Activated naive CD4-positive, alpha-beta T cell treated with anti-CD3 and anti-CD28 coated beads for 36 hours (primary cell): ENCODE measurements at regions of chr14 and their contacts with region 1.

Region 1: GRCh38 chr14:21476925-21477681 is at the starts of genes RAB2B and TOX4:
- DNase-seq: peak; percentile 97
- H3K4me3 Mint-ChIP-seq: peak within 1 kb of the TSS; percentile 100
- H3K27ac Mint-ChIP-seq: peak within 1 kb of the TSS; percentile 98
- H3K4me1 Mint-ChIP-seq: peaks cover 31% of the 10 kb centered on the region
- H3K27me3 Mint-ChIP-seq: no peaks in the 10 kb centered on the region
- total RNA-seq, gene RAB2B: 20.5 to 21.4 TPM
- total RNA-seq, gene TOX4: 57.4 to 58.6 TPM

Region 2: GRCh38 chr14:20989572-20990551 is 487.2 kb before region 1 on chr14 and contains the start of gene METTL17:
- CTCF ChIA-PET with region 1: no interaction called
- intact Hi-C with region 1: loop called (anchors 1 kb)
- DNase-seq: peak; percentile 94
- H3K4me3 Mint-ChIP-seq: peak within 1 kb of the TSS; percentile 86
- H3K27ac Mint-ChIP-seq: peak within 1 kb of the TSS; percentile 86
- H3K4me1 Mint-ChIP-seq: peaks cover 19% of the 10 kb centered on the region
- H3K27me3 Mint-ChIP-seq: no peaks in the 10 kb centered on the region
- total RNA-seq, gene METTL17: 90.9 to 97.5 TPM

Region 3: GRCh38 chr14:21229821-21230220 is 247.3 kb before region 1 on chr14:
- CTCF ChIA-PET with region 1: no interaction called
- intact Hi-C with region 1: no loop called
- DNase-seq: no peak
- H3K4me3 Mint-ChIP-seq: no peak overlapping the region
- H3K27ac Mint-ChIP-seq: peak overlapping the region; percentile 85
- H3K4me1 Mint-ChIP-seq: peaks cover 79% of the 10 kb centered on the region
- H3K27me3 Mint-ChIP-seq: no peaks in the 10 kb centered on the region

Region 4: GRCh38 chr14:21308479-21309237 is 168.4 kb before region 1 on chr14:
- CTCF ChIA-PET with region 1: no interaction called
- intact Hi-C with region 1: loop called (anchors 1 kb)
- DNase-seq: peak; percentile 94
- H3K4me3 Mint-ChIP-seq: peak overlapping the region; percentile 66
- H3K27ac Mint-ChIP-seq: peak overlapping the region; percentile 87
- H3K4me1 Mint-ChIP-seq: peaks cover 23% of the 10 kb centered on the region
- H3K27me3 Mint-ChIP-seq: no peaks in the 10 kb centered on the region

Region 5: DNA sequence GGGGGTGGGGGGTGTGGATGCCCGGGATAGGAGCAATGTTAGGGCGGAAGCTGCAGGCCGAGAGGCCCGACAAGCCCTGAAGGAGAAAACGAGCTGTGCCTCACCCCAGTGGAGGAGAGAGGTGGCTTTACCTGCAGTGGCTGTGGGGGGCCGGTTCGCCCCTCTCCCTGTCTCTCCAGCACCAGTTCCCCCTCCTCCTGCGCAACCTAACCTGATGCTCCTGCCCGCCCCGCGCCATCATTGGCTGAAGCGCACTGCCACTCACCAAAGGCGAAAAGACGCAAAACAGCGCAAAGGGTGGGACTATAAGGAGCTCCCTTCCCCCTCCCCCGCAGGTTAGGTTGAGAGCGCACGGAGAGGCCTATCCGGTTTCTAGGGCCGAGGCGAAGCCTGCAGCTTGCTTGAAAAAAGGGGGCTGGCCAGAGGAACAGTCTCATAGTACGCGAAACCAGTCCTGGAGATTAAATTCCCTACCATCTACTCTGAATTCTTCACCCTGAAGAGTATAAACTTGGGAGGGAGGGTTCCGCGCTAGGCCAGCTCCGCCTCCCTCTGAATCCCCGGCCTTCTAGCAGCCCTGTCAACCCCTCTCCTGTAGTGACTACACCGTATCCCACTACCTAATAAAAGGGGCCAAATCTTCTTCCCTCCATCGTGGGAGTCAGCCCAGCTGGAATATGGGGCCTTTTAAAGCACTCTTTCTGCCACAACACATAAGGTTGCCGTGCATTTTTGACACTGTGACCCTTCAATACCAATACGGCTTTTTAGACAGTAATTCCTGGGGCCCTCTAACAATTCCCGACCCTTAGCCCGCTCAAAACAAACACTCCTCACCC is 39.8 kb before region 1 on chr14:
- CTCF ChIA-PET with region 1: interaction called, 6 read pairs
- intact Hi-C with region 1: loop called (anchors 1 kb)
- DNase-seq: peak; percentile 100
- H3K4me3 Mint-ChIP-seq: peak overlapping the region; percentile 84
- H3K27ac Mint-ChIP-seq: peak overlapping the region; percentile 90
- H3K4me1 Mint-ChIP-seq: peaks cover 52% of the 10 kb centered on the region
- H3K27me3 Mint-ChIP-seq: no peaks in the 10 kb centered on the region

Region 6: DNA sequence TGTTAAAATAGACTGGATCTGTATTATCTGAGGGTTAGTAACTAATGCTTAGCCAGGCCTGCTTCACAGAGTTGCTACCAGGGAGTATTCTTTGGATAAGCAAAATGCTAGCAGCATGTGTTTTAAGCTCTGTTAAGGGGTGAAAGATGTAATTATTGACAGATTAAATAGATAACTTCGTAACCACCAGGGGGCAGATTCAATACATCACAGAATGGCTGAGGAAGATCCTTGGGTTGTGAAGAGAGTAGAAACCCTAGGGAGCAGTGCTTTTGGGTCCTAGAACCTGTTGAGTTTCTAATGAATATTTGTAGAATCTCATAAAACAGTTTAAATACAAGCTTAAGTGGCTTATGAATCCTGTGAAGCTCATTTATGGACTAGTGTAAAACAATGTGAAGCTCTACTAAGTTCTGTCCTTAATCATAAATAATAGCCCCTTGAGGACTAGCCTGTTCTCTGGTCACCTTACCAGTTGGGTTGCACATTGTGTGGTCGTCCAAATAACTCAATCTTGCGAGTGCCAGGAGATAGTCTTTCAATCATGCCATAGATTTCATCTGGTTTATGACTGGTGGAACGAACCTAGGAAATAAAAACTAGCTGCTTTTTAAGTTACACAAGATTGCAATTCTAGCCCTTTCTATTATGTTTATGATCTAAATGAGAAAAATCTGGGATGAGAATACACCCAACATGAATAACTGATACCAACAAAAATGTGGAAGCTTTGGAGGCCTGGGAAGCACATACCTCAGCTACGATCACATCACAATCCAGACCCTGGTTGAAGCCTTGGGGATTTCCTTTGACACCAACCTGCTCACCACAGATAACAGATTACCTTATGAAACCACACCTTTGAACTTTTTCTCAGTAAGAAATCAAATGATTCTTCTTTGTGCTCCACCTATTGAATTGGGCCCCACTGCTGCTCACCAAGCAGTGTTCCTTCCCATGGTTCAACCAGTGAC is 21.7 kb after region 1 on chr14:
- CTCF ChIA-PET with region 1: interaction called, 21 read pairs
- intact Hi-C with region 1: no loop called
- DNase-seq: peak; percentile 32
- H3K4me3 Mint-ChIP-seq: no peak overlapping the region
- H3K27ac Mint-ChIP-seq: peak overlapping the region; percentile 51
- H3K4me1 Mint-ChIP-seq: peaks cover 18% of the 10 kb centered on the region
- H3K27me3 Mint-ChIP-seq: no peaks in the 10 kb centered on the region

Region 7: GRCh38 chr14:21525962-21526671 is 49.0 kb after region 1 on chr14 and contains the start of gene SALL2:
- CTCF ChIA-PET with region 1: no interaction called
- intact Hi-C with region 1: loop called (anchors 1 kb)
- DNase-seq: peak; percentile 86
- H3K4me3 Mint-ChIP-seq: peak within 1 kb of the TSS; percentile 79
- H3K27ac Mint-ChIP-seq: peak within 1 kb of the TSS; percentile 70
- H3K4me1 Mint-ChIP-seq: peaks cover 9% of the 10 kb centered on the region
- H3K27me3 Mint-ChIP-seq: no peaks in the 10 kb centered on the region
- total RNA-seq, gene SALL2: 3.1 to 4.1 TPM

Region 8: DNA sequence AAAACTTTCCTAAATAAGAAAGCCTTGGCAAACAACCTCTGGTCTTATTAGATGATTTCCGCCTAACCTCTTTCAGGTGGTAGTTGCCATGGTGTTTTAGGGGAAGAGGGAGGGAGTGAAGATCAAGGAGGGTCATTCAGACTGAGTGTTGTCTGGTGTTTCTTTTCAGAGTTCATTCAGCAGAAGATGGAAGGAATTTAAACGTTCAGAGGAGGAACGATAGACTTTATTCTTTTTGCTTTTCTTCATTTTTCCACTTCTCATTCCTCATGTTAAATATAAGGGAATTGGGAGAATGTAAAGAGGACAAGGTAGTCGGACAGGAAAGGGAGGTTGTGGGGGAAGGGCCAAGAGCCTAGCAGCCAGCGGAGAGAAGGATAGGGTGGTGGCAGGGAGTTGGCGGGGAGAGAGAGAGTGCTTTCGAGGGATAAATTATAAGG is 66.4 kb after region 1 on chr14:
- CTCF ChIA-PET with region 1: no interaction called
- intact Hi-C with region 1: no loop called
- DNase-seq: no peak
- H3K4me3 Mint-ChIP-seq: no peak overlapping the region
- H3K27ac Mint-ChIP-seq: no peak overlapping the region
- H3K4me1 Mint-ChIP-seq: no peaks in the 10 kb centered on the region
- H3K27me3 Mint-ChIP-seq: peaks cover 15% of the 10 kb centered on the region

Region 9: DNA sequence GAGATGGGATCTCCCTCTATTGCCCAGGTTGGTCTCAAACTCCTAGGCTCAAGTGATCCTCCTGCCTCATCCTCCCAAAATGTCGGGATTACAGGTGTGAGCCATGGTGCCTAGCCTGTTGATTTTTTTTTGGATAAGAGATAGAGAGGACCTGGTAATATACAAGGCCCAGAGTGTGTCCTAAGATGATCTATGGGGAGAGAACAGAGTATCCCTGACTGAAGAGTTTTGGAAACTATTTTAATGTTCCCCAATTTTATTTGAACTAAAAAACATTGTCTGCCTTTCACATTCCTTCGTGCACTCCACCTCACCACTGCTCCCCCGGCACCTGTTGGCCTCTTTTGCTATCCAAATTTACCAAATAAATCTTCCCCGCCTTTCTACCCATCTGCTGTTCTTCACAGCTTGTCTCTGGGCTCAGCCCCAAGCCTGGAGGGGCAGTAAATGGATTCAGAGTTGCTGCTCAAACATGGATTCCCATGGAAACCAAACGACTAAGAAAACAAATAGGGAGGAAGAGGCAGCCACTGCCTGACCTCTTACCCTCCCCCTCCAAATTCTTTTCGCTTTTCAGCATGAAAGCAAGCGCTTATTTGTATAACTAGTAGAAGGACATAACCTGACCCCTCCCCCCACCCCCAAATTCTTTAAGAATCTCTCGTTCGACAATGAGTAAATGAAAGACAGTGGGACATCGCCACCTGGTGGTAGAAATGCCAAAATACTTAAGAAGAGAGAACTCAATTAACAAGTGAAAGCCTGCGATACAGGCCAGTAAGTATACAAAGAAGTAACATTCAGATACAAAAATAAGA is 80.2 kb after region 1 on chr14:
- CTCF ChIA-PET with region 1: interaction called, 4 read pairs
- intact Hi-C with region 1: loop called (anchors 1 kb)
- DNase-seq: peak; percentile 91
- H3K4me3 Mint-ChIP-seq: peak overlapping the region; percentile 27
- H3K27ac Mint-ChIP-seq: no peak overlapping the region
- H3K4me1 Mint-ChIP-seq: peaks cover 6% of the 10 kb centered on the region
- H3K27me3 Mint-ChIP-seq: no peaks in the 10 kb centered on the region